ENCODE measurements at regions of chr3 and their contacts with region 1.

Region 1: GRCh38 chr3:27134165-27134796 is 234.9 kb downstream of the NEK10 start:
- DNase-seq: peak; percentile 65
- ATAC-seq: peak; percentile 76
- H3K4me3 ChIP-seq: no peak overlapping the region
- H3K4me3 Mint-ChIP-seq: no peak overlapping the region
- H3K27ac ChIP-seq: no peak overlapping the region
- H3K27ac Mint-ChIP-seq: no peak overlapping the region
- H3K4me1 ChIP-seq: no peaks in the 10 kb centered on the region
- H3K4me1 Mint-ChIP-seq: no peaks in the 10 kb centered on the region
- H3K27me3 ChIP-seq: no peaks in the 10 kb centered on the region
- H3K27me3 Mint-ChIP-seq: peaks cover 12% of the 10 kb centered on the region
- CTCF ChIP-seq: peak; percentile 94

Region 2: GRCh38 chr3:26460985-26461384 is 673.3 kb before region 1 on chr3:
- CTCF ChIA-PET with region 1: no interaction called
- POLR2A ChIA-PET with region 1: no interaction called
- intact Hi-C with region 1: no loop called
- DNase-seq: no peak
- ATAC-seq: no peak
- H3K4me3 ChIP-seq: no peak overlapping the region
- H3K4me3 Mint-ChIP-seq: no peak overlapping the region
- H3K27ac ChIP-seq: no peak overlapping the region
- H3K27ac Mint-ChIP-seq: no peak overlapping the region
- H3K4me1 ChIP-seq: no peaks in the 10 kb centered on the region
- H3K4me1 Mint-ChIP-seq: no peaks in the 10 kb centered on the region
- H3K27me3 ChIP-seq: no peaks in the 10 kb centered on the region
- H3K27me3 Mint-ChIP-seq: no peaks in the 10 kb centered on the region
- CTCF ChIP-seq: no peak

Region 3: GRCh38 chr3:27114684-27115083 is 19.6 kb before region 1 on chr3:
- CTCF ChIA-PET with region 1: interaction called, 12 read pairs
- POLR2A ChIA-PET with region 1: no interaction called
- intact Hi-C with region 1: no loop called
- DNase-seq: no peak
- ATAC-seq: no peak
- H3K4me3 ChIP-seq: no peak overlapping the region
- H3K4me3 Mint-ChIP-seq: no peak overlapping the region
- H3K27ac ChIP-seq: no peak overlapping the region
- H3K27ac Mint-ChIP-seq: no peak overlapping the region
- H3K4me1 ChIP-seq: no peaks in the 10 kb centered on the region
- H3K4me1 Mint-ChIP-seq: no peaks in the 10 kb centered on the region
- H3K27me3 ChIP-seq: no peaks in the 10 kb centered on the region
- H3K27me3 Mint-ChIP-seq: peaks cover 4% of the 10 kb centered on the region
- CTCF ChIP-seq: no peak

Region 4: GRCh38 chr3:27147215-27147614 is 12.9 kb after region 1 on chr3:
- CTCF ChIA-PET with region 1: interaction called, 13 read pairs
- POLR2A ChIA-PET with region 1: no interaction called
- intact Hi-C with region 1: no loop called
- DNase-seq: no peak
- ATAC-seq: no peak
- H3K4me3 ChIP-seq: no peak overlapping the region
- H3K4me3 Mint-ChIP-seq: no peak overlapping the region
- H3K27ac ChIP-seq: no peak overlapping the region
- H3K27ac Mint-ChIP-seq: no peak overlapping the region
- H3K4me1 ChIP-seq: no peaks in the 10 kb centered on the region
- H3K4me1 Mint-ChIP-seq: no peaks in the 10 kb centered on the region
- H3K27me3 ChIP-seq: no peaks in the 10 kb centered on the region
- H3K27me3 Mint-ChIP-seq: peaks cover 2% of the 10 kb centered on the region
- CTCF ChIP-seq: no peak

Region 5: GRCh38 chr3:27578032-27578431 is 443.8 kb after region 1 on chr3:
- CTCF ChIA-PET with region 1: no interaction called
- POLR2A ChIA-PET with region 1: no interaction called
- intact Hi-C with region 1: no loop called
- DNase-seq: no peak
- ATAC-seq: no peak
- H3K4me3 ChIP-seq: no peak overlapping the region
- H3K4me3 Mint-ChIP-seq: no peak overlapping the region
- H3K27ac ChIP-seq: no peak overlapping the region
- H3K27ac Mint-ChIP-seq: no peak overlapping the region
- H3K4me1 ChIP-seq: no peaks in the 10 kb centered on the region
- H3K4me1 Mint-ChIP-seq: no peaks in the 10 kb centered on the region
- H3K27me3 ChIP-seq: no peaks in the 10 kb centered on the region
- H3K27me3 Mint-ChIP-seq: no peaks in the 10 kb centered on the region
- CTCF ChIP-seq: no peak

Region 6: DNA sequence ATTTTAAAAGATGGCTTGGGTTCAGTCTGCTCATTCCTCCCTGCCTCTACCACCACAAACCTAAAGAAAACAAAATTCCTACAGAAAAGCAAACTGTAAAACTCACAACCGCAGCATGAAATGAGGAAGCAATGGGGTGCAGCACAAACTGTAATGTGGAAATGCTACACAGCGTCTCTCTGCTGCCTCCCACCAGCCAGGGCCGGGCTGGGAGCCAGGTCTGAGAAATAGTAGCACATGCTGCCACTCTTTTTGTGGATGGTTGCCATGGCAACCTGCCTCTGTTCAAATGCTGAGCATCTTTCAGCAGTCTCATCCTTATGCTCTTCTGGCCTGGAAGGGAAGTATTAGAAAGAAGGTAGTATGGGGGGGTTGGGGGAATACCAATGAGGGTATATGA is 532.4 kb after region 1 on chr3:
- CTCF ChIA-PET with region 1: no interaction called
- POLR2A ChIA-PET with region 1: no interaction called
- intact Hi-C with region 1: no loop called
- DNase-seq: peak; percentile 53
- ATAC-seq: peak; percentile 66
- H3K4me3 ChIP-seq: peak overlapping the region in 1 of 5 experiments; percentile 15
- H3K4me3 Mint-ChIP-seq: peak overlapping the region; percentile 66
- H3K27ac ChIP-seq: peak overlapping the region in 1 of 2 donors; percentile 46
- H3K27ac Mint-ChIP-seq: peak overlapping the region; percentile 7
- H3K4me1 ChIP-seq: peaks cover 7 to 14% of the 10 kb centered on the region in 2 donors
- H3K4me1 Mint-ChIP-seq: peaks cover 14% of the 10 kb centered on the region
- H3K27me3 ChIP-seq: no peaks in the 10 kb centered on the region
- H3K27me3 Mint-ChIP-seq: no peaks in the 10 kb centered on the region
- CTCF ChIP-seq: no peak